Dorsolateral prefrontal cortex (tissue), 120 donors: ENCODE measurements at regions of chrX and their contacts with region 1.

Region 1: DNA sequence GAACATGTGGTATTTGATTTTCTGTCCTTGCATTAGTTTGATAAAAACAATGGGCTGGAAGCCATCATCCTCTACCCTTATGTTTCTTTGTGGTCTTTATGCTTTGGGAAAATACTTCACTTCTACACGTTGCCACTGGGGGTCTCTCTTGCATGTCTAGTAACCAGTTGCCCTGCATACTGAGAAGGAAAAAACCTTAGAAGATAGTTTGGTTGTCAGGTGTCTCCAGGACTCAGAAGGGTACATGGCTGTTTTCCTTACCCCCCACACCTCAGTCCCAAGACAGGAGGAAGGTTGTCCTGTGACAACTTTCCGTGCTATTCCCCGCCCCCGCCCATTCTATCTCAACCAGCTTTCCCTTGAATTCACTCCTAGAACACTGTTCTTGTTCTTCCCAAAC is 62.1 kb upstream of the LANCL3 start:
- DNase-seq: no peak
- H3K4me3 ChIP-seq: no peak overlapping the region
- H3K27ac ChIP-seq: no peak overlapping the region
- H3K27me3 ChIP-seq: peaks cover 0 to 27% (median 0%) of the 10 kb centered on the region in 45 donors
- CTCF ChIP-seq: peak in 52 of 56 donors; percentile 8 to 62 (median 41)

Region 2: GRCh38 chrX:37825209-37825842 is 316.0 kb after region 1 on chrX:
- intact Hi-C with region 1: loop called in 1 of 2 experiments (anchors 5 kb)
- DNase-seq: peak in 6 of 10 donors; percentile 8 to 70 (median 36)
- H3K4me3 ChIP-seq: no peak overlapping the region
- H3K27ac ChIP-seq: no peak overlapping the region
- H3K27me3 ChIP-seq: peaks cover 0 to 71% (median 11%) of the 10 kb centered on the region in 45 donors
- CTCF ChIP-seq: peak; percentile 52 to 91 (median 80)